Astrocyte of the cerebellum (primary cell): ENCODE measurements at regions of chr15 and their contacts with region 1.

Region 1: DNA sequence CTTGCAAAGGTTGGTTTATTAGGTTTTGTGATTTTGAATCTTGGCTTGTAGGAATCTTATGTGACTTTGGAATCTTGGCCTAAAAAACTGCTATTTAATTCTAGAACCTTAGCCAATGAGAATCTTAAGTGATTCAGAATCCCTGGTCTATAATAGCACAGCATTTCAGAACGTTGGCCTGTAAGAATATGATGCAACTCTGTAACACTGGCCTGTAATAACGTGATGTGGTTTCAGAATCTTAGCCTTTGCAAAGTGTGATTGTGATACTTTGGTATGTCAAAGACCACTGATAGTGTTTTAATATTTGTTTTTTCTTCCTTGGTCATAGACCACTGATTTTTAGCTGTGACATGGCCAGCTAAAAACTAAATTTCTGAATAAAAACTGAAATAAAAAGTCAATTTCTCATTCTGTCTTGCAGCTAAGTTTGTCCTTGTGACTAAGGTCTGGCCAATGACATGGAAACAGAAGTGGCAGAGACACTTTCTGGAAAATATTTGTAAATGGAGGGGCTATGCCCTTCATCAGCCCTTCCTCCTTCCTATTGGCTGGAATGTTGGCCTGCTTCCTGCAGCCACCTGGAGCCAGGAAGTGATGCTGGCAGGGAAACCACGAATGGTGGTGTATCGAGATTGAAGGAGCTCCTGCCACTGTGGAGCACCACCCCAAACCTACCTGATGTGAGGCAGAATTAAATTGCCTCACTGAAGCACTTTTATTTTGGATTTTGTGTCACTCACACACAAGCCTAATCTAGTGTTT is 42.3 kb upstream of the CORO2B start:
- DNase-seq: peak; percentile 83
- H3K4me3 ChIP-seq: no peak overlapping the region
- CTCF ChIP-seq: no peak

Region 2: GRCh38 chr15:68497206-68497910 is 39.2 kb before region 1 on chr15:
- in situ Hi-C with region 1: loop called (anchors 5 kb)
- DNase-seq: no peak
- H3K4me3 ChIP-seq: no peak overlapping the region
- CTCF ChIP-seq: no peak